ENCODE measurements at regions of chr3 and their contacts with region 1.

Region 1: DNA sequence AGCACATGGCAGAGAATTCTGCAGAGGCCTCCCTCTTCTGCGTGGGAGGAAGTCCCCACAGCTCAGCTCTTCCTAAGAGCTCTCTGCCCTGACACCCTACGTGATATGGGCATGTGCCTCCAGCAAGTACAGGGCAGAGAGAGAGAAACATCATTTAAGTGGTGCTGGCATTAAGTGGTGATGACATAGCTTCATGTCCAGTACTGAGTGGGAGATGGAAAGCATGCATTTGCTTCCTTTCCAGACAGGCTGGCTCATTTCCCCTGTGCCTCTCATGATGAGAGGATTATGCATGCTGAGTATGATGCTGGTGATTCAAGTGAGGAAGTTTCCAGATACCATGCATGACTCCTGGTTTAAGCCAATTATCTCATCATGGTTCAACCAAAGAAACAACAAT is 26.9 kb downstream of the BFSP2 start:
- DNase-seq: no peak
- H3K4me3 ChIP-seq: no peak overlapping the region
- H3K27ac ChIP-seq: no peak overlapping the region
- H3K4me1 ChIP-seq: peaks cover 0 to 6% (median 5%) of the 10 kb centered on the region in 4 donors
- H3K27me3 ChIP-seq: peaks cover 0 to 16% of the 10 kb centered on the region in 2 donors
- CTCF ChIP-seq: no peak

Region 2: GRCh38 chr3:132730891-132731580 is 695.7 kb before region 1 on chr3:
- intact Hi-C with region 1: loop called (anchors 2 kb)
- DNase-seq: no peak
- H3K4me3 ChIP-seq: no peak overlapping the region
- H3K27ac ChIP-seq: no peak overlapping the region
- H3K4me1 ChIP-seq: peaks cover 0 to 6% (median 2%) of the 10 kb centered on the region in 4 donors
- H3K27me3 ChIP-seq: no peaks in the 10 kb centered on the region
- CTCF ChIP-seq: peak; percentile 39 to 44